Body of pancreas (tissue), 4 donors: ENCODE measurements at regions of chr7 and their contacts with region 1.

Region 1: DNA sequence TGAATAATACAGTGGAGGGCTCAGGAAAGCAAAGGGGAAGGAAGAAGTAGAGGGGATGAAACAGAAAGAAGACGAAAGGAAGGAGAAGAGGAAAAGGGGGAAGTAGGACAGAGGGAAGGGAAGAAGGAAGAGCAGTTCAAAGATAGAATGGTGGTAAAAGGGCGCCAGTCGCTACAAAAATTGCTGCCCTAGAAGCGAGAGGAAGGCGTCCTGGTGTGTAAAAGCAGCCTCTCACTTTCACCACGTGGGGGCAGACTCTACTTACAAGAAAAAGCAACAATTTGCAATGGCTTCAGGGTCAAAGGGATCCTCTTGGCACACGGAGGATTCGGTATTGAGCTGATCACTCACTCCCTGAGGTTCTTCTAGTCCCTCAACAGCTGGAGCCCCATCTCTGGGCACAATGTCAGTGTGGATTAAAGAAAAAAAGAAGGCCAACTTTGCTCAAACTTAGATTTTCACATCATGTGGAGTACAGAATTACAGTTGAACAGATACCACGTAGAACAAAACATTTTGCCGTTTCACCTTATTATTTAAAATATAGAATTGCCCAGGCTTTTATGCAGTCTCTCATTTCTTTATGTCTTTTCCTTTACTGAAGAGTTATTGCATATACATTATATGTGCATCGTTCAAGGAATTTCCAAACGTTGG is 31.4 kb upstream of the NPVF start:
- DNase-seq: peak; percentile 74 to 84 (median 79)
- ATAC-seq: peak; percentile 83
- H3K4me3 ChIP-seq: no peak overlapping the region
- H3K27ac ChIP-seq: no peak overlapping the region
- H3K4me1 ChIP-seq: peaks cover 15% of the 10 kb centered on the region
- H3K27me3 ChIP-seq: no peaks in the 10 kb centered on the region
- CTCF ChIP-seq: peak; percentile 72 to 98 (median 90)
- POLR2A ChIP-seq: peak in 1 of 3 donors; percentile 9

Region 2: GRCh38 chr7:25389489-25390106 is 129.9 kb after region 1 on chr7:
- intact Hi-C with region 1: loop called (anchors 5 kb)
- DNase-seq: peak in 3 of 4 donors; percentile 19 to 60 (median 38)
- ATAC-seq: peak; percentile 55
- H3K4me3 ChIP-seq: no peak overlapping the region
- H3K27ac ChIP-seq: no peak overlapping the region
- H3K4me1 ChIP-seq: peaks cover 48% of the 10 kb centered on the region
- H3K27me3 ChIP-seq: no peaks in the 10 kb centered on the region
- CTCF ChIP-seq: peak; percentile 37 to 95 (median 79)
- POLR2A ChIP-seq: no peak

Region 3: DNA sequence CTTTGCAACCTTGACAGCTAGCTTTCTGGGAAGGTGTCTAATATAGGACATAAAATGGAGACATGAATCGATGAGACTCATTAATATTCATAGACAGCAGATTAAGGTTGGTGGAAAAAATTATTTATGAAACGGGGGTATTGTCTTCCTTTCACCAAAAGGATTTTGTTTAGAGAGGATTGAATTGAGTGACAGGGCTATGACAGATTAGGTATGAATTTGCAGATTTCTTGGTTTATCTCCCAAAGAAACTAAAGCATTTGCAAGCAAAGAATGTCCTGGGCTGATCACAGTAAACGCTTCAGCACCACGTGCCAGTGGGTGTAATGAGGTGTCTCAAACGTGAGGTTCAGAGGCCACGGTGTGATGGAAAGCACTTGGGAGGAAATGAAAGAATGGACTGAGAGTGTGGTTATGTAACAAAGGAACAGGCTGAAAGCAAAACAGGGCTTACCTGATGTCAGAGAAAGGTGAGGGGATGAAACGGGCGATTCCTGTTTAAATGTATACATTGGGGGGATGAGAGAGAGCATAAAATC is 297.7 kb after region 1 on chr7:
- intact Hi-C with region 1: loop called (anchors 5 kb)
- DNase-seq: no peak
- ATAC-seq: no peak
- H3K4me3 ChIP-seq: no peak overlapping the region
- H3K27ac ChIP-seq: no peak overlapping the region
- H3K4me1 ChIP-seq: no peaks in the 10 kb centered on the region
- H3K27me3 ChIP-seq: no peaks in the 10 kb centered on the region
- CTCF ChIP-seq: no peak
- POLR2A ChIP-seq: no peak